ENCODE measurements at regions of chr11 and their contacts with region 1.

Region 1: DNA sequence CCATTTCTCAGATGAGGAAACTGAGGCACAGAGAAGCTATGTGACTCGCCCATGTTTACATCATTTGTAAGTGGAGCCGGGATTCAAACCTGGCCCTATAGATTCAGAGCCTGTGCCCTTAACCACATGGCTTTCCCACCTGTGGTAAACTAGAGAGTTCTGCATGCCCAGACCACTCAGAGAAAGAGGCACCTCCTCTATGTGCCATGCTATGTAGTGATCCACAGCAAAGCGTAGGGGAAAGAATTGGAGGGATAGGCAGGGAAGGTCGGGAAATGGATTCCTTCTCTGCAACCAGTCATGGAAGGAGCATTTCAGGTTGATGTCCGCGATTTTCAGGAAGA is 15.4 kb upstream of the POU2AF2 start:
- DNase-seq: no peak
- H3K4me3 ChIP-seq: no peak overlapping the region
- H3K27ac ChIP-seq: no peak overlapping the region
- H3K4me1 ChIP-seq: no peaks in the 10 kb centered on the region
- H3K27me3 ChIP-seq: peaks cover 1 to 3% of the 10 kb centered on the region in 2 experiments
- CTCF ChIP-seq: no peak
- POLR2A ChIP-seq: no peak

Region 2: GRCh38 chr11:110429731-110430266 is 800.3 kb before region 1 on chr11 and contains the start of gene FDX1:
- CTCF ChIA-PET with region 1: interaction called, 9 read pairs
- POLR2A ChIA-PET with region 1: no interaction called
- dilution Hi-C with region 1: no loop called
- intact Hi-C with region 1: loop called (anchors 1 kb)
- DNase-seq: peak; percentile 84
- H3K4me3 ChIP-seq: peak within 1 kb of the TSS; percentile 23 to 75 (median 57)
- H3K27ac ChIP-seq: peak within 1 kb of the TSS; percentile 72
- H3K4me1 ChIP-seq: peaks cover 27% of the 10 kb centered on the region
- H3K27me3 ChIP-seq: no peaks in the 10 kb centered on the region
- CTCF ChIP-seq: peak; percentile 50 to 59
- POLR2A ChIP-seq: no peak
- total RNA-seq, gene FDX1: 9.9 and 11.0 TPM in 2 replicates

Region 3: DNA sequence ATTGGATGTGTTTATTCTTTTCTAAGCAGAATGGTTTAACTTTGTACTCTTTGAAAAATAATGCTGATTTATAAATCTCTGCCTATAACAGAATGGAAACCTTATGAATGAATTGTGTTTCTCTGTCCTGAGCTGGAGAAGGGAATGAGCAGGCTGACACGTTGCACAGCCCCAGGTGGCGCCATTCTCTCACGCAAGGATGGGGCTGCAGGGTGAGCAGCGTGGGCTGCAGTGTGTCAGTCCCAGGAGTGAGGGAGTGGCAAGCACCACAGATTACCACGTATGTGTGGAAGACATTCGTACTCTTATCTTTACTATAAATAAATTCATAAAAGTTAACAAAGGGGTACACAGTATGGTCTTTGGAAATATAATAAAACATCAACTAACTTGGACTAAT is 766.9 kb before region 1 on chr11:
- CTCF ChIA-PET with region 1: interaction called, 69 read pairs
- POLR2A ChIA-PET with region 1: no interaction called
- dilution Hi-C with region 1: no loop called
- intact Hi-C with region 1: loop called (anchors 1 kb)
- DNase-seq: peak; percentile 39
- H3K4me3 ChIP-seq: no peak overlapping the region
- H3K27ac ChIP-seq: no peak overlapping the region
- H3K4me1 ChIP-seq: no peaks in the 10 kb centered on the region
- H3K27me3 ChIP-seq: no peaks in the 10 kb centered on the region
- CTCF ChIP-seq: peak; percentile 41 to 51
- POLR2A ChIP-seq: no peak

Region 4: GRCh38 chr11:110479108-110480101 is 750.7 kb before region 1 on chr11:
- CTCF ChIA-PET with region 1: interaction called, 15 read pairs
- POLR2A ChIA-PET with region 1: no interaction called
- dilution Hi-C with region 1: no loop called
- intact Hi-C with region 1: loop called (anchors 1 kb)
- DNase-seq: no peak
- H3K4me3 ChIP-seq: no peak overlapping the region
- H3K27ac ChIP-seq: no peak overlapping the region
- H3K4me1 ChIP-seq: no peaks in the 10 kb centered on the region
- H3K27me3 ChIP-seq: peaks cover 0 to 2% of the 10 kb centered on the region in 2 experiments
- CTCF ChIP-seq: no peak
- POLR2A ChIP-seq: no peak

Region 5: DNA sequence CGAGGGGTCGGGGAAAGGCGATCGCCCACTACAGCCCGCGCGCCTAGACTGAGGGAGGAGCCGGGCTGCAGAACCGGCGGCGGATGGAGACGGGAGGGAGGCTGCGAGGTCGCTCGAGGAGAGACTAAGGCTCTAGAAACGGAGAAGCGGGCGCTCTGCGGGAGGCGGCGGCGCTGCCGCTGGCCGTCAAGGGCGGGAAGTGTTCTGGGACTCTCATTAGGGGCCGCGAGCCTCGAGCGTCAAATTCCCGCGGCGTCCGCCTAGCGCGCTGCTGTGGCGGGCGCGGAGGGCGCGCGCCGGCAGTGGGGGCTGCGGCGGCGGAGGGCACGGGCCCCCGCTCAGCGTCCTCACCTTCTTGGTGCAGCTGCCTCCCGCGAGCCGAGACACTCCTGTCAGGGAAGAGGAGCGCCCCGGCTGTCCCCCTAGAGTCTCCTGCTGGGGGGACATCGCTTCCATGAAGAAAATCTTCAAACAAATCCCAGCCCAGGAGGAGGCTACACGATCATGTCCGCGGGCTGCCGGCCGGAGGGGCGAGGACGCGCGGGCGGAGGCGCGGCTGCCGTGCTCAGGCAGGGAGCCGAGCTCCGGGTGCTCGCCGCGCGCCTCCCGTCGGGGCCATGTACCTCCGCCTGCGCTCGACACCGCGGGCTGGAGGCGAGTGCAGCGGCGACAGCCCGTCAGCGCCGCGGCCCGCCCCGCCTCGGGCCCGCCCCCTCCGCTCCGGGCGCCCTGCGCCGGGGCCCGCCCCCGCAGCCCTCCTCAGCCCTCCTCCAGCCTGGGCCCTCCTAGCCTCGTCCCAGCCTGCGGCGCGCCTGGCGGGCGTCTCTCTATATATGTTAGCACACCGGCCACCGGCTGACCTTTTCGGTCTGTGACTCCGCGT is 518.1 kb before region 1 on chr11 and contains the start of gene ARHGAP20:
- CTCF ChIA-PET with region 1: interaction called, 13 read pairs
- POLR2A ChIA-PET with region 1: no interaction called
- dilution Hi-C with region 1: no loop called
- intact Hi-C with region 1: loop called (anchors 1 kb)
- DNase-seq: peak; percentile 62
- H3K4me3 ChIP-seq: peak within 1 kb of the TSS; percentile 41 to 55 (median 55)
- H3K27ac ChIP-seq: no peak within 1 kb of the TSS
- H3K4me1 ChIP-seq: peaks cover 21% of the 10 kb centered on the region
- H3K27me3 ChIP-seq: no peaks in the 10 kb centered on the region
- CTCF ChIP-seq: no peak
- POLR2A ChIP-seq: peak; percentile 25
- total RNA-seq, gene ARHGAP20: 1.1 and 1.4 TPM in 2 replicates

Region 6: DNA sequence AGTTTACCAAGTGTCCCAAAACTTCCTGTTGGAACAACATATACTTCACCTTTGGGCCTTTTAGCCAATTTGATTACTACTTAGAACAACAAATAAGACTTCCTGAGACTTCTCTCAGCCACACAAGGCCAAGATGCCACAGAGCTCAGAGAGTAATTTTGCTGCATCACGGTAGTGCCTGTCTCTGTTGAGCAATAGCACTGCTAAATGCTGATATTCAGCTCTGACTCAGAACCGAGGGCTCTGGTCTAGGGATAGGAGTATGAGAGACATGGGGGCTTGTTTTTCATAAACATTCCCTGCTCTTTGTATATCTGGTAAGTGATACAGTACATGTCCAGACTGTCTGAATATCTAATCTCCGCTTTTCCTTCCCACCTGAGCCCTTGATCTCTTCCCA is 257.5 kb before region 1 on chr11:
- CTCF ChIA-PET with region 1: no interaction called
- POLR2A ChIA-PET with region 1: no interaction called
- dilution Hi-C with region 1: no loop called
- intact Hi-C with region 1: no loop called
- DNase-seq: no peak
- H3K4me3 ChIP-seq: no peak overlapping the region
- H3K27ac ChIP-seq: no peak overlapping the region
- H3K4me1 ChIP-seq: no peaks in the 10 kb centered on the region
- H3K27me3 ChIP-seq: no peaks in the 10 kb centered on the region
- CTCF ChIP-seq: no peak
- POLR2A ChIP-seq: no peak

Region 7: DNA sequence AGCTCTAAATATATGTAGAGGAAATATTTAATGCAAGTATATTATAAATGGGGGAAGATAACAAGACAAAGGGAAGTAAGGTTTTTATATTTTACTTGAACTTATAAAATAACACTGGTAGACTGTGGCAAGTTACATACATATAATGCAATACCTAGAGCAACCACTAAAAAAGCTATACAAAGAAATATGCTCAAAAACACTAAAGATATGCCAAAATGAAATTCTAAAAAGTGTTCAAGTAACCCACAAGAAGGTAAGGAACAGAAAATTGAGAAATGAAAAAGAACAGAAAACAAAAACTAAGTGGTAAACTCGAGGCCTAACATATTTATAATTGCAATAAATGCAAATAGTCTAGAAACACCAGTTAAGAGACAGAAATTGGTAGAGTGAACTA is 249.6 kb after region 1 on chr11:
- CTCF ChIA-PET with region 1: no interaction called
- POLR2A ChIA-PET with region 1: no interaction called
- dilution Hi-C with region 1: no loop called
- intact Hi-C with region 1: no loop called
- DNase-seq: no peak
- H3K4me3 ChIP-seq: no peak overlapping the region
- H3K27ac ChIP-seq: no peak overlapping the region
- H3K4me1 ChIP-seq: no peaks in the 10 kb centered on the region
- H3K27me3 ChIP-seq: no peaks in the 10 kb centered on the region
- CTCF ChIP-seq: no peak
- POLR2A ChIP-seq: no peak